Calu3 (cell line): ENCODE measurements at regions of chr12 and their contacts with region 1.

Region 1: GRCh38 chr12:38664661-38665269 is 240.6 kb downstream of the CPNE8 start:
- DNase-seq: peak; percentile 8
- H3K4me3 Mint-ChIP-seq: no peak overlapping the region
- H3K27ac Mint-ChIP-seq: no peak overlapping the region
- H3K4me1 Mint-ChIP-seq: no peaks in the 10 kb centered on the region
- H3K27me3 Mint-ChIP-seq: no peaks in the 10 kb centered on the region
- CTCF ChIP-seq: peak; percentile 18

Region 2: GRCh38 chr12:38906482-38907170 is 241.9 kb after region 1 on chr12:
- CTCF ChIA-PET with region 1: no interaction called
- intact Hi-C with region 1: loop called (anchors 10 kb)
- DNase-seq: peak; percentile 88
- H3K4me3 Mint-ChIP-seq: peak overlapping the region; percentile 90
- H3K27ac Mint-ChIP-seq: peak overlapping the region; percentile 72
- H3K4me1 Mint-ChIP-seq: peaks cover 8% of the 10 kb centered on the region
- H3K27me3 Mint-ChIP-seq: no peaks in the 10 kb centered on the region
- CTCF ChIP-seq: peak; percentile 65